ENCODE measurements at regions of chr2 and their contacts with region 1.

Region 1: DNA sequence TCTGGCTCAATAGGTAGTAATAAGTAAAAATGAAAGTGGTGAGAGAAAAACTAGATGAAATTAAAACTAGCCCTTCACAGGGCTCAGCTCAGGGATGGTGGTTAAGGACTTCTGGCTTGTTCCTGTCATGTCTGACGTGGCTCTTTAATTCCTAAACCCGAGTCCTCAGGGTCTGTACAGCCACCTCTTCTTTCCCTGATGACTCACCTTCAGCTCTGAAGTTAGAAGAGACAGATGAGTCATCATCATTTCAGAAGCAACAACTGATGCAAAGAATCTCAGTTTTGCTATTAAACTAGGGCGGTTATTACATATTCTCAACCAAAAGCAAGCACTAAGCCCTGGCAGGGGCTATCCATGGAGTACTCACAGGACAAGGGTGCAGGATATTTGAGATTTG is 24.0 kb upstream of the ITGB6 start:
- DNase-seq: peak; percentile 56
- ATAC-seq: peak; percentile 78
- H3K4me3 Mint-ChIP-seq: no peak overlapping the region
- H3K27ac Mint-ChIP-seq: peak overlapping the region; percentile 75
- H3K4me1 Mint-ChIP-seq: peaks cover 56% of the 10 kb centered on the region
- H3K27me3 Mint-ChIP-seq: peaks cover 14% of the 10 kb centered on the region

Region 2: GRCh38 chr2:159904127-159904958 is 319.7 kb before region 1 on chr2:
- CTCF ChIA-PET with region 1: no interaction called
- POLR2A ChIA-PET with region 1: no interaction called
- intact Hi-C with region 1: loop called in 1 of 2 experiments (anchors 5 kb)
- DNase-seq: peak; percentile 91
- ATAC-seq: peak; percentile 76
- H3K4me3 Mint-ChIP-seq: peak within 1 kb of the TSS; percentile 93
- H3K27ac Mint-ChIP-seq: peak within 1 kb of the TSS; percentile 97
- H3K4me1 Mint-ChIP-seq: peaks cover 73% of the 10 kb centered on the region
- H3K27me3 Mint-ChIP-seq: no peaks in the 10 kb centered on the region

Region 3: GRCh38 chr2:160096409-160096808 is 127.7 kb before region 1 on chr2:
- CTCF ChIA-PET with region 1: no interaction called
- POLR2A ChIA-PET with region 1: no interaction called
- intact Hi-C with region 1: no loop called
- DNase-seq: peak; percentile 22
- ATAC-seq: peak; percentile 74
- H3K4me3 Mint-ChIP-seq: no peak overlapping the region
- H3K27ac Mint-ChIP-seq: no peak overlapping the region
- H3K4me1 Mint-ChIP-seq: peaks cover 2% of the 10 kb centered on the region
- H3K27me3 Mint-ChIP-seq: peaks cover 6% of the 10 kb centered on the region

Region 4: GRCh38 chr2:160269803-160270570 is 45.9 kb after region 1 on chr2:
- CTCF ChIA-PET with region 1: interaction called, 4 read pairs
- POLR2A ChIA-PET with region 1: interaction called, 6 read pairs
- intact Hi-C with region 1: loop called (anchors 1 to 2 kb)
- DNase-seq: peak; percentile 80
- ATAC-seq: peak; percentile 59
- H3K4me3 Mint-ChIP-seq: peak overlapping the region; percentile 57
- H3K27ac Mint-ChIP-seq: peak overlapping the region; percentile 52
- H3K4me1 Mint-ChIP-seq: peaks cover 46% of the 10 kb centered on the region
- H3K27me3 Mint-ChIP-seq: no peaks in the 10 kb centered on the region

Region 5: DNA sequence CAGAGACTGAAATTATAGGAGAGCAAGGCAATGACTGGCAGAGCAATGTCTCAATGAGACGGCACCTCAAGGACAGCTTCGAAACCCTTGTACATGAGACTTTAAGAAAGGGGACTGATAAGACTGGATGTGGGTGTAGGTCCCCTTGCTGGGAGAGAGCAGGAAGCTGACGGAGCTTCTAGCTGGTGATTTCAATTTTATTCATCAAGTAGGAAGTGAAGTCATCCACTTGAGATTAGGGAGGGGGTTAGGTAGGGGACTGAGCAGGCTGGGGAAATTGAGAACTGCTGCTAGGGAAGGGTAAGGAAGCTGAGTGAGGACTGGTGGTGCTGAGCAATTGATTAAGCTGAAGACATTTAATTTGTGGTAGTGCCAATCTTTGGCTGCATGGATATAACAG is 75.5 kb after region 1 on chr2:
- CTCF ChIA-PET with region 1: no interaction called
- POLR2A ChIA-PET with region 1: no interaction called
- intact Hi-C with region 1: loop called (anchors 2 to 5 kb)
- DNase-seq: peak; percentile 48
- ATAC-seq: peak; percentile 59
- H3K4me3 Mint-ChIP-seq: no peak overlapping the region
- H3K27ac Mint-ChIP-seq: peak overlapping the region; percentile 88
- H3K4me1 Mint-ChIP-seq: peaks cover 82% of the 10 kb centered on the region
- H3K27me3 Mint-ChIP-seq: no peaks in the 10 kb centered on the region

Region 6: GRCh38 chr2:160482673-160483072 is 258.6 kb after region 1 on chr2:
- CTCF ChIA-PET with region 1: no interaction called
- POLR2A ChIA-PET with region 1: no interaction called
- intact Hi-C with region 1: loop called in 1 of 2 experiments (anchors 2 kb)
- DNase-seq: peak; percentile 30
- ATAC-seq: peak; percentile 79
- H3K4me3 Mint-ChIP-seq: peak overlapping the region; percentile 50
- H3K27ac Mint-ChIP-seq: peak overlapping the region; percentile 84
- H3K4me1 Mint-ChIP-seq: peaks cover 78% of the 10 kb centered on the region
- H3K27me3 Mint-ChIP-seq: no peaks in the 10 kb centered on the region